ENCODE measurements at regions of chr11 and their contacts with region 1.

Region 1: GRCh38 chr11:9460322-9461067 is at the start of gene ZNF143:
- DNase-seq: peak; percentile 90 to 100 (median 95)
- ATAC-seq: peak; percentile 90
- H3K4me3 ChIP-seq: peak within 1 kb of the TSS; percentile 80
- H3K27ac ChIP-seq: peak within 1 kb of the TSS; percentile 99
- H3K4me1 ChIP-seq: peaks cover 13 to 15% of the 10 kb centered on the region in 2 experiments; a peak in 4 of 5 replicates
- H3K27me3 ChIP-seq: no peaks in the 10 kb centered on the region
- CTCF ChIP-seq: no peak
- EP300 ChIP-seq: peak; percentile 7
- POLR2A ChIP-seq: peak; percentile 89
- RAD21 ChIP-seq: no peak
- polyA plus RNA-seq, gene ZNF143: 18.4 to 34.4 TPM

Region 2: DNA sequence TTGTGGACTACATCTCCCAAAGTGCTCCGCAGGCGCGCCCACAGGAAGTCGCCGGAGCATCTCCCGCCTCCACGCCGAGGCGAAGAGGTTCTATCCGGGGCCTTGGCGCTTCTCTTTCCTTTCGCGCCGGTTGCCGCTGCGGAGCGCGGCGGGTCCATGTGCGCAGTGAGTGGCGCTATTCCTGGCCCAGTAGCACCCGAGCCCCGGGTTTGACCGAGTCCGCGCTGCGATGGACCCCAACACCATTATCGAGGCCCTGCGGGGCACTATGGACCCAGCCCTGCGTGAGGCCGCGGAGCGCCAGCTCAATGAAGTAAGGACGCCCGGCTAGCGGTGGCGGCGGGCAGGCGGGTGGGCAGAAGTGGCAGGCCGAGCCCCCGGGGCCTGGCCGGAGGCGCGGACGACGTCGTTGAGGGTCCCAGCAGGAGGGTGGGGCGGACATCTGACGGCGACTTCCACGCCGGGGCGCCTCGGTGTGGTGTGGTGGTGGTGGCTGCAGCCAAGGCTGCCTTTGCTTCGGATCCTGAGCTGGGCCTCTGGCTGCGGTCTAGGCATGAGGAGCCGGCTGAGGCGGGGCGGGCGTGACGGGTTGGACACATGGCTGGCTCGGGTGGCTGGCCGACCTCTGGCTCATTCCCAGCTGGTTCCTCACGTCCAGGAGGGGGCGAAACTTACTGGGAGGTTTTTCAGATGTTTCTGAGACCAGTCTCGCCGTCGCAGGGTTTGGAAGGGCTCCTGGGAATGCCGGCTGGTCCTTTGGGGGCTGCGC is 75.8 kb before region 1 on chr11 and contains the start of gene IPO7:
- CTCF ChIA-PET with region 1: no interaction called
- POLR2A ChIA-PET with region 1: interaction called, 21 read pairs
- in situ Hi-C with region 1: no loop called
- intact Hi-C with region 1: no loop called
- DNase-seq: peak; percentile 83 to 97 (median 88)
- ATAC-seq: peak; percentile 96
- H3K4me3 ChIP-seq: peak within 1 kb of the TSS; percentile 90
- H3K27ac ChIP-seq: peak within 1 kb of the TSS; percentile 95
- H3K4me1 ChIP-seq: peaks cover 0 to 7% of the 10 kb centered on the region in 2 experiments; a peak in 3 of 5 replicates
- H3K27me3 ChIP-seq: no peaks in the 10 kb centered on the region
- CTCF ChIP-seq: no peak; a peak in 4 of 6 replicates
- EP300 ChIP-seq: no peak; the same call in 1 of the 2 replicates
- POLR2A ChIP-seq: peak; percentile 97
- RAD21 ChIP-seq: 0 out of 4 replicates have a peak, but pooled peaks of 1 of the 2 experiments have one; percentile 9
- polyA plus RNA-seq, gene IPO7: 23.6 to 28.7 TPM

Region 3: GRCh38 chr11:9448576-9449352 is 11.7 kb before region 1 on chr11:
- CTCF ChIA-PET with region 1: no interaction called
- POLR2A ChIA-PET with region 1: interaction called, 45 read pairs
- in situ Hi-C with region 1: no loop called
- intact Hi-C with region 1: no loop called
- DNase-seq: no peak
- ATAC-seq: peak; percentile 32
- H3K4me3 ChIP-seq: no peak overlapping the region
- H3K27ac ChIP-seq: no peak overlapping the region
- H3K4me1 ChIP-seq: no peaks in the 10 kb centered on the region
- H3K27me3 ChIP-seq: no peaks in the 10 kb centered on the region
- CTCF ChIP-seq: no peak
- EP300 ChIP-seq: no peak
- POLR2A ChIP-seq: peak; percentile 64
- RAD21 ChIP-seq: no peak

Region 4: DNA sequence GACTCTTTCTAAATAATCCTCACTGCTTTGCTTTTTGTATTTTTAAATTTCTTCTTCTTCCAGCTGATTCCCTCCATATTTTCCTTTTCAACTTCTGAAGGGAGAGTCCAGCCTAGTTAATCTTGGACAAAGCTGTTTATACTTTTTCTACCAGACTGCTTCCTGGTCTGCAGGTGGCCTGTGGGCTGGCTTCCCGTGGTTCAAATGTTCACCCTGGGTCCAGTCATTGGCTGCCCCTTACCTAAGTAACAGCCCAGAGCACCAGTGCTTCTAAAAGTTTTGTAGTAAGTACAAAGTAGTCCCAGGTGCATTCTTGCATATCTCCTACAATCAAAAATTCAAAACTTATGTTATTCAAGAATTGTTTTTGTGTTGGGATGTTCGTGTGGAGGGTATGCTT is 19.4 kb after region 1 on chr11:
- CTCF ChIA-PET with region 1: no interaction called
- POLR2A ChIA-PET with region 1: interaction called, 25 read pairs
- in situ Hi-C with region 1: no loop called
- intact Hi-C with region 1: no loop called
- DNase-seq: no peak
- ATAC-seq: no peak
- H3K4me3 ChIP-seq: no peak overlapping the region
- H3K27ac ChIP-seq: no peak overlapping the region
- H3K4me1 ChIP-seq: no peaks in the 10 kb centered on the region
- H3K27me3 ChIP-seq: no peaks in the 10 kb centered on the region
- CTCF ChIP-seq: no peak
- EP300 ChIP-seq: no peak
- POLR2A ChIP-seq: no peak
- RAD21 ChIP-seq: no peak

Region 5: GRCh38 chr11:9573052-9573774 is 112.7 kb after region 1 on chr11 and contains the start of gene WEE1:
- CTCF ChIA-PET with region 1: no interaction called
- POLR2A ChIA-PET with region 1: interaction called, 19 read pairs
- in situ Hi-C with region 1: no loop called
- intact Hi-C with region 1: loop called (anchors 10 kb)
- DNase-seq: peak; percentile 94 to 98 (median 96)
- ATAC-seq: peak; percentile 94
- H3K4me3 ChIP-seq: peak within 1 kb of the TSS; percentile 92
- H3K27ac ChIP-seq: peak within 1 kb of the TSS; percentile 98
- H3K4me1 ChIP-seq: peaks cover 33 to 35% of the 10 kb centered on the region in 2 experiments
- H3K27me3 ChIP-seq: no peaks in the 10 kb centered on the region
- CTCF ChIP-seq: no peak
- EP300 ChIP-seq: peak; percentile 43; the same call in 1 of the 2 replicates
- POLR2A ChIP-seq: peak; percentile 92
- RAD21 ChIP-seq: no peak
- polyA plus RNA-seq, gene WEE1: 21.9 to 30.6 TPM

Region 6: GRCh38 chr11:9703280-9703679 is 242.8 kb after region 1 on chr11:
- CTCF ChIA-PET with region 1: no interaction called
- POLR2A ChIA-PET with region 1: no interaction called
- in situ Hi-C with region 1: no loop called
- intact Hi-C with region 1: no loop called
- DNase-seq: no peak
- ATAC-seq: no peak
- H3K4me3 ChIP-seq: no peak overlapping the region
- H3K27ac ChIP-seq: no peak overlapping the region
- H3K4me1 ChIP-seq: no peaks in the 10 kb centered on the region
- H3K27me3 ChIP-seq: no peaks in the 10 kb centered on the region; a peak in 1 of 5 replicates
- CTCF ChIP-seq: no peak
- EP300 ChIP-seq: no peak
- POLR2A ChIP-seq: no peak
- RAD21 ChIP-seq: no peak

Region 7: DNA sequence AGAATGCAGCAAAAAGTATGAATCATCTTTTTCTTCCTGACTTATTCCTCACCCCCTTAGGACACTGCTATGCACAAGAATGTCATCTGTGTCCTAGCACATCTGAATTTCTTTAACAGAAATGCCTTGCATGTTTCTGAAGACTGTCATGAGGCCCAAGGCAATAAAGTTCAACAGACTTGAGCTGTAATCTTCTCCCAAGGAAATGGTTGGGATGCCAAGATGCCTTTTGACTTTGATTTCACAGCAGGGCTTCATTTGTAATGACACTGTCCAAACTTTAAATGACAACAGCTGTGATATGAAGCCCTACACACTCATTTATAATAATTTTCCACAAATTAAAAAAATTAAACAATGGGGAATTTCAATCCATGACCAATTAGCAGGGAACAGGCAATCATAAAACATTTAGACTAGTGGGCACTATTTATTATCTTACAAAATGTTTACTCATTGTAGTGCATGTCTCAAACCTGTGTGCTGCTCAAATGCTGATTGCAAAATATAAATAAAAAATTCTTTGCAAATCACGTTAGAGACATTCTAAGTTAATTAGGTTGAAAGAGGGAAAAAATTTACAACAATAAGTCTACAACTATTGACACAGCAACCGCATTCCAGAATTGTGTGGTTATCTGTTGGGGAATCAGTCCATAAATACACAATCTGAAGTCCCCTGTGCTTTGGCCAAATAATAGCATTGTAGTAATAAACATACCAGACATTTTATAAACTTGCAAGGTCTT is 445.7 kb after region 1 on chr11:
- CTCF ChIA-PET with region 1: no interaction called
- POLR2A ChIA-PET with region 1: no interaction called
- in situ Hi-C with region 1: no loop called
- intact Hi-C with region 1: no loop called
- DNase-seq: no peak
- ATAC-seq: no peak
- H3K4me3 ChIP-seq: no peak overlapping the region
- H3K27ac ChIP-seq: no peak overlapping the region
- H3K4me1 ChIP-seq: no peaks in the 10 kb centered on the region
- H3K27me3 ChIP-seq: no peaks in the 10 kb centered on the region
- CTCF ChIP-seq: no peak
- EP300 ChIP-seq: no peak
- POLR2A ChIP-seq: no peak
- RAD21 ChIP-seq: no peak